K562 (cell line): ENCODE measurements at regions of chr21 and their contacts with region 1.

Region 1: GRCh38 chr21:30194701-30195299 is 21.1 kb downstream of the CLDN8 start:
- DNase-seq: peak; percentile 37 to 53 (median 38)
- ATAC-seq: peak; percentile 83
- H3K4me3 ChIP-seq: no peak overlapping the region
- H3K27ac ChIP-seq: no peak overlapping the region
- H3K4me1 ChIP-seq: no peaks in the 10 kb centered on the region
- H3K27me3 ChIP-seq: no peaks in the 10 kb centered on the region
- CTCF ChIP-seq: peak; percentile 39 to 66 (median 51); a peak in 5 of 6 replicates
- EP300 ChIP-seq: no peak
- POLR2A ChIP-seq: no peak
- RAD21 ChIP-seq: peak; percentile 82 to 90

Region 2: GRCh38 chr21:29091032-29091431 is 1103.8 kb before region 1 on chr21:
- CTCF ChIA-PET with region 1: interaction called, 4 read pairs
- POLR2A ChIA-PET with region 1: no interaction called
- in situ Hi-C with region 1: no loop called
- intact Hi-C with region 1: loop called (anchors 10 kb)
- DNase-seq: no peak
- ATAC-seq: no peak
- H3K4me3 ChIP-seq: no peak overlapping the region
- H3K27ac ChIP-seq: no peak overlapping the region
- H3K4me1 ChIP-seq: no peaks in the 10 kb centered on the region
- H3K27me3 ChIP-seq: peaks cover 5 to 6% of the 10 kb centered on the region in 2 experiments; a peak in 3 of 5 replicates
- CTCF ChIP-seq: no peak
- EP300 ChIP-seq: no peak
- POLR2A ChIP-seq: no peak
- RAD21 ChIP-seq: no peak

Region 3: DNA sequence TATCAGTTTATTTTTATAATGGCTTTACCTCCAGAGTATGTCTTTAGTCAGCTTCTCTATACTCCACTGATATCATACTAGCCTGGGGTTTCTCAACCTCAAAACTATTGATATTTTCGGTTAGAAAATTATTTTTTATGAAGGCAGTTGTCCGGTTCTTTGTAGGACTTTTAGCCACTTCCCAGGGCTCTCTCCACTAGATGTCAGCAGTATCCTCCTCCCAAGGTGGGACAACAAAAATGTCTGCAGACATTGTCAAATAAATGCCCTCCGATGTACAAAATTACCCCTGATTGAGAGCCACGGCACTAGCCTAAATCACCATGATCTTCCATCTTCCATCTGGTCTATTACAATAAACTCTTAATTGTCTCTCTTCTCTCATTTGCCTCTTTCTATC is 250.9 kb before region 1 on chr21:
- CTCF ChIA-PET with region 1: interaction called, 4 read pairs
- POLR2A ChIA-PET with region 1: no interaction called
- in situ Hi-C with region 1: no loop called
- intact Hi-C with region 1: loop called (anchors 1 kb)
- DNase-seq: peak in 2 of 4 experiments; percentile 24 to 44
- ATAC-seq: peak; percentile 49; the same call in 1 of the 3 replicates
- H3K4me3 ChIP-seq: no peak overlapping the region
- H3K27ac ChIP-seq: no peak overlapping the region
- H3K4me1 ChIP-seq: peaks cover 0 to 9% of the 10 kb centered on the region in 2 experiments; a peak in 3 of 5 replicates
- H3K27me3 ChIP-seq: peaks cover 7 to 14% of the 10 kb centered on the region in 2 experiments; a peak in 4 of 5 replicates
- CTCF ChIP-seq: peak; percentile 34 to 62 (median 40); a peak in 4 of 6 replicates
- EP300 ChIP-seq: no peak
- POLR2A ChIP-seq: no peak
- RAD21 ChIP-seq: peak; percentile 33 to 68; a peak in 3 of 4 replicates

Region 4: DNA sequence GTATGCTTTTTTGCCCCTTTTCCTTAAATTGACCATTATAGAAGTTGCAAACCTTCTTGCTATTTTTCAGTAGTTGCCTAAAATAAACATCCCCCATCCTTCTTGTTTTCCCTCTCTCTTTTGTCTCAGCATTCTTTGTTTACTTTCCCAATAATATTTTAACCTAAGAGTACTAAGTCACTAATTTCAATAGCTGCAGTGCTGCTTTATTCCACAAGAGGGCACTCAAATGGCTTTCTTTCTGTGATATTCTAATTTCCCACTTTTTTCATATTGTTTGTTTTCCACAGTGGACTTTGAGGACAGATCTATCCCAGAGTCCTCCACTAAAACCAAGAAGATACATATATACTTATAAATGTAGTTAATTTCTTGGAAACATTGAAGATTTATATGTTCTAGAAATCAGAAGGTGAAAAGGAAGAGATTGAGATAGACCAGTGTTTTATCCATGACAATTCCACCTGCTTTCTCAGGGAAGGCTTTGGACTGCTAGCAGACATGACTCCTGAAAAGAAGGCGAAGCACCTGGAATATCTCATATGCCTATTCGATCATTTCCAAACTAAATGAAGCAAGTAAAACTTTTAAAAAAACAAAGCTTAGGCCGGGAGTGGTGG is 150.2 kb before region 1 on chr21:
- CTCF ChIA-PET with region 1: no interaction called
- POLR2A ChIA-PET with region 1: no interaction called
- in situ Hi-C with region 1: no loop called
- intact Hi-C with region 1: loop called (anchors 10 kb)
- DNase-seq: peak; percentile 13 to 44 (median 20)
- ATAC-seq: no peak
- H3K4me3 ChIP-seq: no peak overlapping the region
- H3K27ac ChIP-seq: no peak overlapping the region
- H3K4me1 ChIP-seq: no peaks in the 10 kb centered on the region
- H3K27me3 ChIP-seq: no peaks in the 10 kb centered on the region
- CTCF ChIP-seq: peak; percentile 48 to 83 (median 70); a peak in 5 of 6 replicates
- EP300 ChIP-seq: no peak
- POLR2A ChIP-seq: no peak
- RAD21 ChIP-seq: peak; percentile 59 to 74